ENCODE measurements at regions of chr21 and their contacts with region 1.

Region 1: DNA sequence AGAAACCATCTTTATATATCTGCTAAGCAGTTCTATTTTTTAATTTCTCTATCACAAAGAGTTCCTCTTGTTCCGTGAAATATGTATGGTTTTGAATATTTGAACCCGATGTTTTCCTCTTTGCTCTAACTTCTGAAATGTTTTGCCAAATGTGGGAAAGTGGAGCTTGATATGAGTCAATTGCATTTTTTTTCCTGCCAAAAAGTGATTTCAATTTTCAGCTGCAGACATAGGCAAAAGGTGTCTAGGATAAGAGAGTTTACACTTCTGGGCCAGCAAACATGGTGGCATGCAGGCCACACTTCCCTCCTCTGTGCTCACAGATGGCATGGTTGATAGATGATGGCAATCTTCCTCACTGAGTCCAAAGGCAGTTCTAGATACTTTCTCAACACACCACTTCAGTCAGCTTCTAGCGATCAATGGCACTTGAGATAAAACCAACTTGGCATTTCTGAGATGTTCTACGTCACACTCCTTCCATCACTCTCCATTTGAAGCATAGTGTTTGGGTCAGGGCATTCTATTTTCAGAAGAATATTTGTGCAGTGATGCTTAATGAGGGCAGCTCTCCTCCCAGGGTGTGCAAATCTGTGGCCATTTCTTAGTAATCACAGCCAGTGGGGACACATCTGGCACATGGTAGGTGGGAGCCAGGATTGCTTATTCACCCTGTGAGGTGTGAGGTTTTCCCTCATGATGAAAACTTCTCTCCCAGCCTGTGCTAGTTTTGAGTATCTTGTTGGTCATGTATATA is 54.4 kb upstream of the SCAF4 start:
- DNase-seq: no peak
- ATAC-seq: no peak
- H3K4me3 ChIP-seq: no peak overlapping the region
- H3K27ac ChIP-seq: no peak overlapping the region
- H3K4me1 ChIP-seq: no peaks in the 10 kb centered on the region
- H3K27me3 ChIP-seq: no peaks in the 10 kb centered on the region
- CTCF ChIP-seq: no peak
- EP300 ChIP-seq: no peak
- POLR2A ChIP-seq: no peak
- RAD21 ChIP-seq: no peak

Region 2: GRCh38 chr21:31659536-31660258 is 126.6 kb before region 1 on chr21 and contains the start of gene SOD1:
- CTCF ChIA-PET with region 1: no interaction called
- POLR2A ChIA-PET with region 1: no interaction called
- RAD21 ChIA-PET with region 1: no interaction called
- SMC1A ChIA-PET with region 1: no interaction called
- in situ Hi-C with region 1: no loop called
- intact Hi-C with region 1: no loop called
- DNase-seq: peak; percentile 75
- ATAC-seq: peak; percentile 96
- H3K4me3 ChIP-seq: peak within 1 kb of the TSS; percentile 95
- H3K27ac ChIP-seq: peak within 1 kb of the TSS; percentile 80
- H3K4me1 ChIP-seq: peaks cover 9% of the 10 kb centered on the region
- H3K27me3 ChIP-seq: no peaks in the 10 kb centered on the region
- CTCF ChIP-seq: no peak
- EP300 ChIP-seq: no peak
- POLR2A ChIP-seq: peak; percentile 100
- RAD21 ChIP-seq: no peak
- polyA plus RNA-seq, gene SOD1: 655 to 710 TPM

Region 3: GRCh38 chr21:31772674-31773555 is 13.4 kb before region 1 on chr21:
- CTCF ChIA-PET with region 1: interaction called, 12 read pairs
- POLR2A ChIA-PET with region 1: interaction called, 7 read pairs
- RAD21 ChIA-PET with region 1: interaction called, 4 read pairs
- SMC1A ChIA-PET with region 1: interaction called, 6 read pairs
- in situ Hi-C with region 1: no loop called
- intact Hi-C with region 1: no loop called
- DNase-seq: peak; percentile 63
- ATAC-seq: peak; percentile 93
- H3K4me3 ChIP-seq: no peak overlapping the region
- H3K27ac ChIP-seq: peak overlapping the region; percentile 62
- H3K4me1 ChIP-seq: peaks cover 15% of the 10 kb centered on the region
- H3K27me3 ChIP-seq: no peaks in the 10 kb centered on the region
- CTCF ChIP-seq: no peak
- EP300 ChIP-seq: peak in 1 of 2 experiments; percentile 63; a peak in 1 of 4 replicates
- POLR2A ChIP-seq: no peak
- RAD21 ChIP-seq: no peak

Region 4: GRCh38 chr21:31879241-31879650 is 92.9 kb after region 1 on chr21:
- CTCF ChIA-PET with region 1: no interaction called
- POLR2A ChIA-PET with region 1: no interaction called
- RAD21 ChIA-PET with region 1: no interaction called
- SMC1A ChIA-PET with region 1: no interaction called
- in situ Hi-C with region 1: no loop called
- intact Hi-C with region 1: no loop called
- DNase-seq: no peak
- ATAC-seq: no peak
- H3K4me3 ChIP-seq: no peak overlapping the region
- H3K27ac ChIP-seq: no peak overlapping the region
- H3K4me1 ChIP-seq: no peaks in the 10 kb centered on the region
- H3K27me3 ChIP-seq: peaks cover 0 to 3% of the 10 kb centered on the region in 2 experiments; a peak in 1 of 4 replicates
- CTCF ChIP-seq: no peak
- EP300 ChIP-seq: no peak
- POLR2A ChIP-seq: no peak
- RAD21 ChIP-seq: no peak

Measured in GM12878 (cell line).